Adrenal gland (tissue), 19 donors: ENCODE measurements at regions of chr18 and their contacts with region 1.

Region 1: GRCh38 chr18:30280880-30281470 is 761.6 kb downstream of the DSC3 start:
- DNase-seq: peak in 2 of 7 donors; percentile 7 to 16
- H3K4me3 ChIP-seq: no peak overlapping the region
- H3K27ac ChIP-seq: no peak overlapping the region
- H3K4me1 ChIP-seq: no peaks in the 10 kb centered on the region
- H3K27me3 ChIP-seq: no peaks in the 10 kb centered on the region
- CTCF ChIP-seq: peak; percentile 15 to 57 (median 37)
- POLR2A ChIP-seq: no peak

Region 2: DNA sequence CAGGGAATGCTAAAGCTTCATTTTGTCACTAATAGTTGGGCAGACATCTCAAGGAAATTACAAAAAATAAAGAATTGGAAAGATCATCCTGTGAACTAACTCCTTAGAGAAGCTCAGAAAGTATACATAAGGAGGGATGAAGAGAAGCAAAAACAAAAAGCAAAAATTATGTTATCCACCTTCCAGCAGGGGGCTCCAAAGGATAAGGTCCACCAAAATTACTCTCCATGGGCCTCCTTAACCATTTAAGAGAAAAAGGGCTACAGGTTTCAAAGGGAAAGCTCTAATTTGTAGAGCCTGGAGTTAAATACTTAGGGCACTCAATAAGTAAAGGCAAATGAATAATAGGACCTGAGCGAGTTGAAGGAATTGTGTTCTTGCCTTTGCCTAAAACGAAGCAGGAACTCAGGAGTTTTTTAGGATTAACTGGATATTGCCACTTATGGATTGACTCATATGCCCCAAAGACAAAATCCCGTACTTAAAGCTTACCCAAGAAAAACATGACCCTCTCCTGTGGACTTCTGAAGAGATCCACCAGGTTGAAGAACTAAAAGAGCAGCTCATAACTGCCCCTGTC is 406.4 kb before region 1 on chr18:
- intact Hi-C with region 1: loop called in 1 of 2 experiments (anchors 10 kb)
- DNase-seq: no peak
- H3K4me3 ChIP-seq: no peak overlapping the region
- H3K27ac ChIP-seq: no peak overlapping the region
- H3K4me1 ChIP-seq: no peaks in the 10 kb centered on the region
- H3K27me3 ChIP-seq: no peaks in the 10 kb centered on the region
- CTCF ChIP-seq: peak in 5 of 6 experiments; percentile 34 to 55 (median 50)
- POLR2A ChIP-seq: no peak

Region 3: DNA sequence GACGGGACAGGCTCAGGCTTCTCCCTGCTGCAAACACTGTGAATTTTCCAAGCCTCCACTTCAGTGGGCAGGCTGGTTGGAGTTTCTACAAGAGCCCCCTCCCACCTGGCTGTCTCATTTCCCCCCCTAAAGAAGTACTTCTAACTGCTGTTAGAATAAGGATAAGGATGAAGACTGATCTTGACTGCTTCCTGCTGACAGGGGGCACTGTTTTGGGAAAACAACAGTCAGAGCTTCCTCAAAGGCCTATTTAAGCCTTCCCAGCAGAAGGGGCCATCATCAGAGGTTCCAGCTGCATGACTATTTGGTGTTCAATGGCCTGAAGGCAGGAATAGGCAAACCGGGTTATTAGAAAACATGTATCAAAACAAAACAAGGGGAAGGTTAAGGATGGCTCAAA is 401.2 kb before region 1 on chr18:
- intact Hi-C with region 1: loop called (anchors 10 kb)
- DNase-seq: no peak
- H3K4me3 ChIP-seq: no peak overlapping the region
- H3K27ac ChIP-seq: no peak overlapping the region
- H3K4me1 ChIP-seq: no peaks in the 10 kb centered on the region
- H3K27me3 ChIP-seq: no peaks in the 10 kb centered on the region
- CTCF ChIP-seq: no peak
- POLR2A ChIP-seq: no peak

Region 4: GRCh38 chr18:30103881-30104280 is 177.1 kb before region 1 on chr18:
- intact Hi-C with region 1: no loop called
- DNase-seq: no peak
- H3K4me3 ChIP-seq: no peak overlapping the region
- H3K27ac ChIP-seq: no peak overlapping the region
- H3K4me1 ChIP-seq: no peaks in the 10 kb centered on the region
- H3K27me3 ChIP-seq: no peaks in the 10 kb centered on the region
- CTCF ChIP-seq: no peak
- POLR2A ChIP-seq: no peak